ENCODE measurements at regions of chr3 and their contacts with region 1.

Region 1: GRCh38 chr3:46998121-46998851 is 18.8 kb downstream of the NBEAL2 start:
- DNase-seq: peak; percentile 59 to 88 (median 74)
- ATAC-seq: peak; percentile 79
- H3K4me3 ChIP-seq: no peak overlapping the region
- H3K4me3 Mint-ChIP-seq: no peak overlapping the region
- H3K27ac ChIP-seq: no peak overlapping the region
- H3K27ac Mint-ChIP-seq: peak overlapping the region; percentile 25
- H3K4me1 ChIP-seq: peaks cover 35% of the 10 kb centered on the region
- H3K4me1 Mint-ChIP-seq: peaks cover 16% of the 10 kb centered on the region
- H3K27me3 ChIP-seq: no peaks in the 10 kb centered on the region
- H3K27me3 Mint-ChIP-seq: no peaks in the 10 kb centered on the region
- CTCF ChIP-seq: peak; percentile 86

Region 2: DNA sequence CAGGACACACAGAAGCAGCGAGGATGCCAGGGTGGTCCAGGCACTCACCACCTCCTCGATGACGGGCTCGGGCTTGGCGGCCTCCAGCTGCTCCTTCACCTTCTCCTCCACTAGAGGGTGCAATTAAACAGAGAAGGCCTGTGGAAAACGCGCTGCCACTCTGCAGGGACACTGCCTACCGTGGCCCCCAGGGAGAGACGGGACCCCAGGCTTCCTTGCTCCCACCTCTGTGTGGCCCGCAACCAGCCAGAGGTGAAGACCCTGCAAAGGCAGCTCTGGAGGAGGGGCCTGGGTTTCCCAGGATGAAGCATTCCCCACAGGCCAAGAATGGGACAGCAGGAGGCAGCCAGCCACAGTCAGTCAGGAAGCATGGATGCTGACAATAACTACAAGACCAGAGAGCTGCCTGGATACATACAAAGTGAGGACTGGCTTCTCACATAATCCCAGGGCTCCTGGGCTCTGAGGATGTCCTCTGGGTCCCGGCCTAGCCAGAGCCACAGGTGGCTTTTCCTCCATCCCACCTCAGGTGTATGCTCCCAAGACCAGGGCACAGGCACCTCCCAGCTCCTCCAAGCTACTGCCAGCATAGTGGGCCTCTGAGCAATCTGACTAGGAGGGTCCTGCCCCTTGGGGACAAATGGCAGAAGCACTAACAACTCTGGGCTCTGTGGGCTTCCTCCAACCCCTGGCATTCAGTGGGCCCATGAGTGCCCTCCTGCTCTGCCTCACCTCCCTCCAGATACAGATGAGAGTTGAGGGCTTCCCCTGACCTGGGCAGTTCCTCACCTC is 74.5 kb before region 1 on chr3:
- CTCF ChIA-PET with region 1: interaction called, 11 read pairs
- POLR2A ChIA-PET with region 1: interaction called, 4 read pairs
- intact Hi-C with region 1: loop called (anchors 1 to 2 kb)
- DNase-seq: peak in 12 of 14 experiments; percentile 20 to 65 (median 28)
- ATAC-seq: peak; percentile 62
- H3K4me3 ChIP-seq: no peak overlapping the region
- H3K4me3 Mint-ChIP-seq: no peak overlapping the region
- H3K27ac ChIP-seq: no peak overlapping the region
- H3K27ac Mint-ChIP-seq: peak overlapping the region; percentile 49
- H3K4me1 ChIP-seq: peaks cover 46% of the 10 kb centered on the region
- H3K4me1 Mint-ChIP-seq: peaks cover 39% of the 10 kb centered on the region
- H3K27me3 ChIP-seq: no peaks in the 10 kb centered on the region
- H3K27me3 Mint-ChIP-seq: no peaks in the 10 kb centered on the region
- CTCF ChIP-seq: peak; percentile 62